H1 (cell line): ENCODE measurements at regions of chr11 and their contacts with region 1.

Region 1: GRCh38 chr11:95705485-95706124 is 84.0 kb downstream of the FAM76B start:
- DNase-seq: peak; percentile 62 to 88
- H3K4me3 ChIP-seq: no peak overlapping the region
- H3K27ac ChIP-seq: no peak overlapping the region
- H3K4me1 ChIP-seq: 0 out of 7 replicates have a peak, but pooled peaks cover 0 to 2% (median 0%) of the 10 kb centered on the region in 4 experiments
- H3K27me3 ChIP-seq: peaks cover 0 to 1% (median 0%) of the 10 kb centered on the region in 4 experiments; a peak in 1 of 7 replicates
- CTCF ChIP-seq: peak; percentile 78 to 92 (median 90)
- EP300 ChIP-seq: no peak
- POLR2A ChIP-seq: no peak
- RAD21 ChIP-seq: peak; percentile 99

Region 2: GRCh38 chr11:95163106-95163505 is 542.5 kb before region 1 on chr11:
- CTCF ChIA-PET with region 1: interaction called, 407 read pairs
- POLR2A ChIA-PET with region 1: no interaction called
- DNase-seq: no peak
- H3K4me3 ChIP-seq: no peak overlapping the region
- H3K27ac ChIP-seq: no peak overlapping the region
- H3K4me1 ChIP-seq: no peaks in the 10 kb centered on the region
- H3K27me3 ChIP-seq: no peaks in the 10 kb centered on the region
- CTCF ChIP-seq: no peak
- EP300 ChIP-seq: no peak
- POLR2A ChIP-seq: no peak
- RAD21 ChIP-seq: no peak

Region 3: DNA sequence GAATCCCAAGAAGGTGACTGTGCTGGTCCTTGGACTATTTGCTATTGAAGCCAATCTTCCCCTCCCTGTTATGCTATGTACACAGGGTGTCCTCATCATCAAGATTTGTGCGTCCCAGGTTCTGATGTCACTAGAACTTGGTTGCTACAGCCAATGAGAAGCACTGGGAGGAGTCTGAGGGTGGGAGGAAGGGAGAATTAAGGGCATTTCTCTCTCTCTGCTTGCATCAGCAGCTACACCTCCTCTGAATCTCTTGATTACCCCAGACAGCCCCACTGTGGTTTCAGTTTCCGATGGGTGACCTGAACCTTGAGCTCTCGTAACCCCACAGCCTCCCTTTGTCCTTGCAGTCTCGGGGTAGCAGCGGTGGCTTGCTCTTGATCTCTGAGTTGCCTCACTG is 262.2 kb before region 1 on chr11:
- CTCF ChIA-PET with region 1: interaction called, 10 read pairs
- POLR2A ChIA-PET with region 1: no interaction called
- DNase-seq: no peak
- H3K4me3 ChIP-seq: no peak overlapping the region
- H3K27ac ChIP-seq: no peak overlapping the region
- H3K4me1 ChIP-seq: peaks cover 0 to 6% (median 3%) of the 10 kb centered on the region in 4 experiments; a peak in 4 of 7 replicates
- H3K27me3 ChIP-seq: no peaks in the 10 kb centered on the region
- CTCF ChIP-seq: no peak
- EP300 ChIP-seq: no peak
- POLR2A ChIP-seq: no peak
- RAD21 ChIP-seq: no peak

Region 4: GRCh38 chr11:95584180-95584579 is 121.4 kb before region 1 on chr11:
- CTCF ChIA-PET with region 1: interaction called, 12 read pairs
- POLR2A ChIA-PET with region 1: no interaction called
- DNase-seq: no peak
- H3K4me3 ChIP-seq: no peak overlapping the region
- H3K27ac ChIP-seq: no peak overlapping the region
- H3K4me1 ChIP-seq: no peaks in the 10 kb centered on the region
- H3K27me3 ChIP-seq: no peaks in the 10 kb centered on the region
- CTCF ChIP-seq: no peak
- EP300 ChIP-seq: no peak
- POLR2A ChIP-seq: no peak
- RAD21 ChIP-seq: no peak

Region 5: DNA sequence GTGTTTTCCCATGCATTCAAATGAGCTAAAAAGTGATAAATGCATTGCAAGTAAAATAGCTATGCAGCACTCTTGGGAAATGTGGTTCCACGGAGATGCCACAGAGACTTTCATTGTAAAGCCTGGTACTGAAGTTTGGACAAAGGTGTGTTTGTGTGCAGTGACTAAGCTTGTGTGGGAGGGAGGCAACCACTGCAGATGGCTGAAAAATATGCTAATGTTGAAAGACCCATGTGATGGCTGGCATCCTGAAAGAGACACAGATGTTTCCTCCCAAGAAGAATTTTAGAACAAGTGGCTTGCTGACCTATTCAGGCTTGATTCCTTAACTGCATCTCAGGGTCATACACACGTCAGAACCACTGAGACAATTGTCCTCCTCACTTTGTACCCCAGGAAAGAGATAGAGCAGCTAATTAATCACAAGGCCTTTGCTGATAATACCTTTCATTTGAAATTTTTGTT is 10.2 kb after region 1 on chr11:
- CTCF ChIA-PET with region 1: interaction called, 45 read pairs
- POLR2A ChIA-PET with region 1: no interaction called
- DNase-seq: no peak
- H3K4me3 ChIP-seq: no peak overlapping the region
- H3K27ac ChIP-seq: no peak overlapping the region
- H3K4me1 ChIP-seq: no peaks in the 10 kb centered on the region
- H3K27me3 ChIP-seq: no peaks in the 10 kb centered on the region
- CTCF ChIP-seq: no peak
- EP300 ChIP-seq: no peak
- POLR2A ChIP-seq: no peak
- RAD21 ChIP-seq: no peak

Region 6: GRCh38 chr11:95764267-95764898 is 58.8 kb after region 1 on chr11:
- CTCF ChIA-PET with region 1: interaction called, 24 read pairs
- POLR2A ChIA-PET with region 1: no interaction called
- DNase-seq: no peak
- H3K4me3 ChIP-seq: no peak overlapping the region
- H3K27ac ChIP-seq: no peak overlapping the region
- H3K4me1 ChIP-seq: no peaks in the 10 kb centered on the region
- H3K27me3 ChIP-seq: no peaks in the 10 kb centered on the region
- CTCF ChIP-seq: peak in 2 of 3 experiments; percentile 38 to 52; a peak in 2 of 4 replicates
- EP300 ChIP-seq: no peak
- POLR2A ChIP-seq: no peak
- RAD21 ChIP-seq: peak; percentile 77 to 80